Activated CD4-positive, alpha-beta memory T cell treated with anti-CD3 and anti-CD28 coated beads for 36 hours (primary cell): ENCODE measurements at regions of chr4 and their contacts with region 1.

Region 1: GRCh38 chr4:147096667-147097604 is 151.3 kb upstream of the TTC29 start:
- DNase-seq: no peak
- H3K4me3 Mint-ChIP-seq: no peak overlapping the region
- H3K27ac Mint-ChIP-seq: no peak overlapping the region
- H3K4me1 Mint-ChIP-seq: no peaks in the 10 kb centered on the region
- H3K27me3 Mint-ChIP-seq: peaks cover 12% of the 10 kb centered on the region

Region 2: GRCh38 chr4:146095091-146095690 is 1001.7 kb before region 1 on chr4:
- CTCF ChIA-PET with region 1: interaction called, 15 read pairs
- POLR2A ChIA-PET with region 1: no interaction called
- intact Hi-C with region 1: no loop called
- DNase-seq: peak; percentile 12
- H3K4me3 Mint-ChIP-seq: no peak overlapping the region
- H3K27ac Mint-ChIP-seq: no peak overlapping the region
- H3K4me1 Mint-ChIP-seq: no peaks in the 10 kb centered on the region
- H3K27me3 Mint-ChIP-seq: peaks cover 7% of the 10 kb centered on the region

Region 3: GRCh38 chr4:146342600-146343192 is 754.2 kb before region 1 on chr4:
- CTCF ChIA-PET with region 1: interaction called, 32 read pairs
- POLR2A ChIA-PET with region 1: no interaction called
- intact Hi-C with region 1: loop called (anchors 1 kb)
- DNase-seq: peak; percentile 27
- H3K4me3 Mint-ChIP-seq: no peak overlapping the region
- H3K27ac Mint-ChIP-seq: no peak overlapping the region
- H3K4me1 Mint-ChIP-seq: peaks cover 3% of the 10 kb centered on the region
- H3K27me3 Mint-ChIP-seq: no peaks in the 10 kb centered on the region

Region 4: DNA sequence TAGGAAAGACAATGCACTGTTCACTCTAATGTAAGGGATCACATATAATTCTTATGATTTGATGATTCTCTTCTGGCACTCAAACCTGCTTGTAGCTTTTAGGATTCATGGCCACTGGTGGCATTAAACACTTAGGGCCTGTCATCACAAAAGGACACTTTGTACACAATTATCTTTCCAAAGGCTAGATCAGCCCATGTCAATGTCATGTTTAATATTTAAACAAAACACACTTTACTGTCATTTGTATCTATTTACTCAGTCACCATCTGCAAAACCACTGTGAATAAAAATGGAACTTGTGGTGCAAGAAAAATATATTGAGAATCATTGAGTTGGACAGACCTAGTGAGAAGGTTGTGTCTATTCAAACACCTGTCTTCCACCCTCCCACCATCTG is 67.6 kb before region 1 on chr4:
- CTCF ChIA-PET with region 1: interaction called, 11 read pairs
- POLR2A ChIA-PET with region 1: no interaction called
- intact Hi-C with region 1: no loop called
- DNase-seq: no peak
- H3K4me3 Mint-ChIP-seq: no peak overlapping the region
- H3K27ac Mint-ChIP-seq: no peak overlapping the region
- H3K4me1 Mint-ChIP-seq: no peaks in the 10 kb centered on the region
- H3K27me3 Mint-ChIP-seq: no peaks in the 10 kb centered on the region

Region 5: DNA sequence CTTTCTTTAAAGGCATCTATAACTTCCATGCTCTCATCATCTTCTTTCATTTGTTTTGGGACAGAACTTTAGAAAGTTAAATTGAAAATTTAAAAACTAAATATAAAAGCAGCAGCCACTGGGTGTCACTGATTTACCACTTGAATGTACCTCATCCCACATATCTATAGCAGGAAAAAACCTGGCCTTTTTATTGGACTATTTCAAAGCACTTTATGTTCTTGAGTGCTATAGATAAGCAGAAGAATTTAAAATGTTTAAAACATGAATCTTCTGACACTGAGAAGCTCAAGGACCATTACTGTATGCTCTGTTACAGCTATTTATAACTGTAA is 14.1 kb after region 1 on chr4:
- CTCF ChIA-PET with region 1: interaction called, 12 read pairs
- POLR2A ChIA-PET with region 1: no interaction called
- intact Hi-C with region 1: no loop called
- DNase-seq: no peak
- H3K4me3 Mint-ChIP-seq: no peak overlapping the region
- H3K27ac Mint-ChIP-seq: no peak overlapping the region
- H3K4me1 Mint-ChIP-seq: no peaks in the 10 kb centered on the region
- H3K27me3 Mint-ChIP-seq: peaks cover 3% of the 10 kb centered on the region

Region 6: DNA sequence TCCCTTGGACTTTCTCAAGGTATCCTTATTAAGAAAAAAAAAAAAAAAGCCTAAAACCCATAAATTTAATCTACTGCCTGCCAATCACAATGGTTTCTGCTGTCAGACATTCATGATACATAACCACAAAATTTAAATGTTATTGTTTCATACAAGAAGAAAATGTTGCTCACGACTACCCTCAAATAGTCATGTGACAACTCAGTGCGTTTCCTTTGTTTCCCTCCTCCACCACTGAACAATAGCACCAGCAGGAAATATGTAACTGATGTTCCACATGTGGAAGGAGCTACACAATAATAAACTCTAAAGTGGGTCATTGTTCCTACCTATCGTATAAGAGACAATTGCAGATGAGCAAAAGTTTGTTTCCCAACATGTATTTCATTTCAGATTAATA is 139.9 kb after region 1 on chr4:
- CTCF ChIA-PET with region 1: no interaction called
- POLR2A ChIA-PET with region 1: no interaction called
- intact Hi-C with region 1: no loop called
- DNase-seq: no peak
- H3K4me3 Mint-ChIP-seq: no peak overlapping the region
- H3K27ac Mint-ChIP-seq: no peak overlapping the region
- H3K4me1 Mint-ChIP-seq: no peaks in the 10 kb centered on the region
- H3K27me3 Mint-ChIP-seq: no peaks in the 10 kb centered on the region